ENCODE measurements at regions of chr12 and their contacts with region 1.

Region 1: GRCh38 chr12:56084958-56085543 is 5.1 kb downstream of the ERBB3 start:
- DNase-seq: peak; percentile 20
- H3K4me3 ChIP-seq: no peak overlapping the region
- H3K27ac ChIP-seq: no peak overlapping the region
- H3K4me1 ChIP-seq: peaks cover 16% of the 10 kb centered on the region
- H3K27me3 ChIP-seq: peaks cover 4 to 8% of the 10 kb centered on the region in 2 experiments
- CTCF ChIP-seq: peak; percentile 40 to 58
- POLR2A ChIP-seq: no peak

Region 2: DNA sequence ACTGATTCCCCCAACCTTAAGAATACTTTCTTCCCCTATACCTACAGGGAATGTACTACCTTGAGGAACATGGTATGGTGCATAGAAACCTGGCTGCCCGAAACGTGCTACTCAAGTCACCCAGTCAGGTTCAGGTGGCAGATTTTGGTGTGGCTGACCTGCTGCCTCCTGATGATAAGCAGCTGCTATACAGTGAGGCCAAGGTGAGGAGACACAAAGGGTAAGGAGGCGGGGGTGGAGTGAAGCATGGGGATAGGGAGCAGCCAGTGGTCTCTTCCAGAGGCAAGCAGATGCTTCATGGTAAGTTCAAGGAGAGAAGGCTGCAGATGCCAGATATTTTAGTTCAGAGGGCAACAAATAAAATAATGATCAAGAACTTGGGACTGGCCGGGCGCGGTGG is 12.7 kb after region 1 on chr12:
- CTCF ChIA-PET with region 1: interaction called, 59 read pairs
- POLR2A ChIA-PET with region 1: interaction called, 5 read pairs
- dilution Hi-C with region 1: no loop called
- intact Hi-C with region 1: no loop called
- DNase-seq: no peak
- H3K4me3 ChIP-seq: no peak overlapping the region
- H3K27ac ChIP-seq: no peak overlapping the region
- H3K4me1 ChIP-seq: peaks cover 22% of the 10 kb centered on the region
- H3K27me3 ChIP-seq: peaks cover 15 to 19% of the 10 kb centered on the region in 2 experiments
- CTCF ChIP-seq: no peak
- POLR2A ChIP-seq: no peak

Measured in endothelial cell of umbilical vein (primary cell).